ENCODE measurements at regions of chr2 and their contacts with region 1.

Region 1: GRCh38 chr2:135052042-135052876 is at the start of gene RAB3GAP1:
- DNase-seq: peak; percentile 83
- H3K4me3 ChIP-seq: peak within 1 kb of the TSS; percentile 76 to 99 (median 99)
- H3K27ac ChIP-seq: peak within 1 kb of the TSS; percentile 99
- H3K4me1 ChIP-seq: peaks cover 20% of the 10 kb centered on the region
- H3K27me3 ChIP-seq: no peaks in the 10 kb centered on the region
- CTCF ChIP-seq: no peak
- total RNA-seq, gene RAB3GAP1: 74.9 to 116 TPM

Region 2: DNA sequence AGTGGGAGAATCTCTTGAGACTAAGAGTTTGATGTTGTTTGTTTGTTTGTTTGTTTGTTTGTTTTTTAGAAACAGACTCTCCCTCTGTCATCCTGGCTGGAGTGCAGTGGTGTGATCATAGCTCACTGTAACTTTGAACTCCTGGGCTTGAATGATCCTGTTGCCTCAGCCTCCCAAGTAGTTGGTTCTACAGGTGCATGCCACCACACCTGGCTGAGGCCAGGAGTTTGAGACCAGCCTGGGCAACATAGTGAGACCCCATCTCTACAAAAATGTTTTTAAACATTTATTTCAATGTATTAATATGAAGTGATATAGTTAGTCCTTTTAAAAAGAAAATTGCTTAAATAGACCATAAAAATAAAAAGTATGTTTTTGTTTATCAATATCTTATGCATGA is 40.6 kb before region 1 on chr2:
- CTCF ChIA-PET with region 1: no interaction called
- dilution Hi-C with region 1: no loop called
- in situ Hi-C with region 1: no loop called
- intact Hi-C with region 1: loop called (anchors 2 kb)
- DNase-seq: no peak
- H3K4me3 ChIP-seq: no peak overlapping the region
- H3K27ac ChIP-seq: no peak overlapping the region
- H3K4me1 ChIP-seq: no peaks in the 10 kb centered on the region
- H3K27me3 ChIP-seq: no peaks in the 10 kb centered on the region
- CTCF ChIP-seq: no peak

Region 3: GRCh38 chr2:135124924-135125886 is 72.9 kb after region 1 on chr2:
- CTCF ChIA-PET with region 1: no interaction called
- dilution Hi-C with region 1: no loop called
- in situ Hi-C with region 1: no loop called
- intact Hi-C with region 1: loop called (anchors 5 kb)
- DNase-seq: peak; percentile 83
- H3K4me3 ChIP-seq: no peak overlapping the region
- H3K27ac ChIP-seq: peak overlapping the region; percentile 95
- H3K4me1 ChIP-seq: peaks cover 17% of the 10 kb centered on the region
- H3K27me3 ChIP-seq: no peaks in the 10 kb centered on the region
- CTCF ChIP-seq: no peak

Region 4: DNA sequence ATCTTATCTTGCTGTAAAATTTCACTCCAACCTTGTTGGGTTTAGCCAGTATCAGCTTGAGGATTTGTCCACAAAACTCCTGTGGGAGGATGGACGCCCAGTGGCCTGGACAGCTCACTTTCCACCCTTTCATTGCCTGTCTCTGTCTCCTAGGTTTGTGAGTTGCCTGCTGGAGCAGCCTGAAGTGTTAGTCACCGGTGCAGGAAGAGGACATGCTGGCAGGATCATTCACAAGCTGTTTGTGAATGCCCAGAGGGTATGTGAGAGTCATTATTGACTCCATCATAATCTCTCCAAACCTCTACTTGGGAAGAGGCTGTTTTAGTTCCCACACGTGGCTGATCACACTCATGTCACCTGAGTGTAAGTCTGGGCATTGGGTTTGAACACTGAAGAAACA is 112.2 kb after region 1 on chr2:
- CTCF ChIA-PET with region 1: no interaction called
- dilution Hi-C with region 1: no loop called
- in situ Hi-C with region 1: no loop called
- intact Hi-C with region 1: loop called (anchors 5 kb)
- DNase-seq: peak; percentile 95
- H3K4me3 ChIP-seq: no peak overlapping the region
- H3K27ac ChIP-seq: peak overlapping the region; percentile 51
- H3K4me1 ChIP-seq: peaks cover 18% of the 10 kb centered on the region
- H3K27me3 ChIP-seq: no peaks in the 10 kb centered on the region
- CTCF ChIP-seq: peak in 1 of 2 donors; percentile 2

Region 5: GRCh38 chr2:135258193-135258592 is 205.9 kb after region 1 on chr2:
- CTCF ChIA-PET with region 1: no interaction called
- dilution Hi-C with region 1: no loop called
- in situ Hi-C with region 1: no loop called
- intact Hi-C with region 1: loop called (anchors 2 kb)
- DNase-seq: peak; percentile 6
- H3K4me3 ChIP-seq: no peak overlapping the region
- H3K27ac ChIP-seq: peak overlapping the region; percentile 74
- H3K4me1 ChIP-seq: peaks cover 27% of the 10 kb centered on the region
- H3K27me3 ChIP-seq: no peaks in the 10 kb centered on the region
- CTCF ChIP-seq: peak in 1 of 2 donors; percentile 19